ENCODE measurements at regions of chr4 and their contacts with region 1.

Region 1: GRCh38 chr4:188015025-188015778 is 19.6 kb downstream of the ZFP42 start:
- DNase-seq: peak; percentile 69 to 79
- H3K4me3 ChIP-seq: no peak overlapping the region
- H3K4me3 Mint-ChIP-seq: peak overlapping the region; percentile 44
- H3K27ac Mint-ChIP-seq: peak overlapping the region; percentile 91
- H3K4me1 ChIP-seq: peaks cover 38% of the 10 kb centered on the region
- H3K4me1 Mint-ChIP-seq: peaks cover 28% of the 10 kb centered on the region
- H3K27me3 ChIP-seq: no peaks in the 10 kb centered on the region
- H3K27me3 Mint-ChIP-seq: no peaks in the 10 kb centered on the region
- CTCF ChIP-seq: no peak

Region 2: DNA sequence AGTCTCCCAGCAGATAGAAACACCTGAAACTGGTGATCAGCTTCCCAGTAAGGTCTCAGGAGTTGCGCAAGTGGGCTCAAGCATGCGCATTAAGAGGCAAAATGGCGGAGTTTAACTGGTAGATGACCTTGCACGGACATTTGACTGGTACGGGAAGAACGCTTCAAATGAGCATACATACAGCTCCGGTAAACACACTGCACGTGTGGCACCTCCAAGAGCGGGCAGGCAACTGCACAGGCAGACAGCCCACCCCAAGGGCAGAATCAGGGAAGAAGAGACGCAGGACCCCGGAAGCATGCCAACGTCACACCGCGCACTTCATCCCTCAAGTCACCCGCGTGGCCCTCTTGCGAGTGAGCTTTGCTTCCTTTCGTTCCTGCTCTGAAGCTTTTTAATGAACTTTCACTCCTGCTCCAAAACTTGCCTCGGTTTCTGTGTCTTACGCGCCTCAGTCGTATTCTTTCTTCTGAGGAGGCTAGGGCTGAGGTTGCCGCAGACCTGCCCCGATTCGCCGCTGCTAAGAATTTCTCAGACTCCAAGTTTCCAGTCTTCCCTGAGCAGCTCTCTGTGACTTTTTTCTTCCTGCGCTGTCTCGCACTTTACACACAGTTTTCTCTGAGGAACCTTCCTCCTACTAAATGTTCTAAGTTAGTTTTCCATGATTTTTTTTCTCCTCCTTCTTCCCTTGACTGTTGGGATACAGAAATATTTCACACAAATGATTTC is 200.3 kb before region 1 on chr4:
- CTCF ChIA-PET with region 1: no interaction called
- POLR2A ChIA-PET with region 1: no interaction called
- intact Hi-C with region 1: loop called (anchors 10 kb)
- DNase-seq: peak; percentile 82 to 84
- H3K4me3 ChIP-seq: peak overlapping the region; percentile 71
- H3K4me3 Mint-ChIP-seq: peak overlapping the region; percentile 94
- H3K27ac Mint-ChIP-seq: peak overlapping the region; percentile 98
- H3K4me1 ChIP-seq: 0 out of 2 replicates have a peak, but pooled peaks cover 8% of the 10 kb centered on the region
- H3K4me1 Mint-ChIP-seq: peaks cover 6% of the 10 kb centered on the region
- H3K27me3 ChIP-seq: no peaks in the 10 kb centered on the region
- H3K27me3 Mint-ChIP-seq: no peaks in the 10 kb centered on the region
- CTCF ChIP-seq: no peak

Region 3: DNA sequence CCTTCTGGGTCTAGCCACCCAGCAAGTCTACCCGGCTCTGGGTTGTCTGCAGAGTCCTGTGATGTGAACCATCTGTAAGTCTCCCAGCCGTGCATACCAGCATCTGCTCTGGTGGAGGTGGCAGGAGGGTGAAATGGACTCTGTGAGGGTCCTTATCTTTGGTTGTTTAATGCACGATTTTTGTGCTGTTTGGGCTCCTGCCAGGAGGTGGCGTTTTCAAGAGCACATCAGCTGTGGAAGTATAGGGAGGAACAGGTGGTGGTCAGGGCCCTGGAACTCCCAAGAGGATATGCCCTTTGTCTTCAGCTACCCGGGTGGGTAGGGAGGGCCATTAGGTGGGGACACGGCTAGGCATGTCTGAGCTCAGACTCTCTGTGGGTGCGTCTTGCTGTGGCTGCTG is 86.2 kb before region 1 on chr4:
- CTCF ChIA-PET with region 1: no interaction called
- POLR2A ChIA-PET with region 1: no interaction called
- intact Hi-C with region 1: loop called (anchors 1 kb)
- DNase-seq: peak; percentile 26 to 46
- H3K4me3 ChIP-seq: no peak overlapping the region
- H3K4me3 Mint-ChIP-seq: no peak overlapping the region
- H3K27ac Mint-ChIP-seq: peak overlapping the region; percentile 49
- H3K4me1 ChIP-seq: peaks cover 17% of the 10 kb centered on the region
- H3K4me1 Mint-ChIP-seq: peaks cover 7% of the 10 kb centered on the region
- H3K27me3 ChIP-seq: no peaks in the 10 kb centered on the region
- H3K27me3 Mint-ChIP-seq: no peaks in the 10 kb centered on the region
- CTCF ChIP-seq: peak in 1 of 2 experiments; percentile 43

Region 4: DNA sequence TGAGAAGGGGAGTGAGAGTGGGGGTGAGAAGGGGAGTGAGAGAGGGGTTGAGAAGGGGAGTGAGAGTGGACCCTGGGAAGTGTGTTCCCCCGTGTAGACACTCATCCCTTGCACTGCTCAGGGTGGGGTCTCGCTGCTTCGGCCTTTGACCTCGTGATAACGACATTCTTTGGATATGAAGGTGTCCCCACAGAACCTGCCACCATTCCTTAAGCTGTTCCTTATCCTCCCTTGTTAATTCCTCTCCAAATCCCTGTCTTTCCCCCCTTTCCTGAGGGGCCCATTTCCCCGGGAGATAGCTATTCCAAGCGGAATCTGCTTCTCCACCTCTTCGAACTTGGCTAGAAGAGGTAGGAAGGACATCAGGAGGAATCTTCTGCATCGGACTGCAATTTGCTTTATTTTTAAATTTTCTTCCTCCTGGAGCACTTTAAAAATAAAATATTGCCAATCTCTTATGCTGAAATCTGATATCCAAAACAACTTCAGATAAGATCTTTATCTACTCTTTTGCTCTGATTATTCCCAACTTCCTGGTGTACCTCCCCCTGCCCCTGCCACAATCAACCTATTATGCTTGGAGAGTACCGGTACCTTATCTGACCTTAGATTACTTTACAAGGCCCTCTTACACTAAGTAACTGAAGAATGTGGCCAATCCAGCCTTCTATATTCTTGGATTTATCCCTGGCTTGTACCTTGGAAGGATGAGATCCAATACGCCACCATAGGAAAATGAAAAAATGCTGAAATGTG is 139.6 kb after region 1 on chr4:
- CTCF ChIA-PET with region 1: no interaction called
- POLR2A ChIA-PET with region 1: no interaction called
- intact Hi-C with region 1: loop called (anchors 2 kb)
- DNase-seq: peak; percentile 59 to 81
- H3K4me3 ChIP-seq: no peak overlapping the region
- H3K4me3 Mint-ChIP-seq: peak overlapping the region; percentile 60
- H3K27ac Mint-ChIP-seq: peak overlapping the region; percentile 63
- H3K4me1 ChIP-seq: peaks cover 6% of the 10 kb centered on the region
- H3K4me1 Mint-ChIP-seq: peaks cover 8% of the 10 kb centered on the region
- H3K27me3 ChIP-seq: no peaks in the 10 kb centered on the region
- H3K27me3 Mint-ChIP-seq: no peaks in the 10 kb centered on the region
- CTCF ChIP-seq: no peak

Region 5: GRCh38 chr4:188329521-188329920 is 314.3 kb after region 1 on chr4:
- CTCF ChIA-PET with region 1: no interaction called
- POLR2A ChIA-PET with region 1: no interaction called
- intact Hi-C with region 1: loop called (anchors 2 kb)
- DNase-seq: peak; percentile 75 to 78
- H3K4me3 ChIP-seq: no peak overlapping the region
- H3K4me3 Mint-ChIP-seq: peak overlapping the region; percentile 47
- H3K27ac Mint-ChIP-seq: peak overlapping the region; percentile 93
- H3K4me1 ChIP-seq: peaks cover 41% of the 10 kb centered on the region
- H3K4me1 Mint-ChIP-seq: peaks cover 27% of the 10 kb centered on the region
- H3K27me3 ChIP-seq: no peaks in the 10 kb centered on the region
- H3K27me3 Mint-ChIP-seq: no peaks in the 10 kb centered on the region
- CTCF ChIP-seq: no peak

Measured in Caco-2 (cell line).